Testis (tissue), 5 donors: ENCODE measurements at regions of chr2 and their contacts with region 1.

Region 1: DNA sequence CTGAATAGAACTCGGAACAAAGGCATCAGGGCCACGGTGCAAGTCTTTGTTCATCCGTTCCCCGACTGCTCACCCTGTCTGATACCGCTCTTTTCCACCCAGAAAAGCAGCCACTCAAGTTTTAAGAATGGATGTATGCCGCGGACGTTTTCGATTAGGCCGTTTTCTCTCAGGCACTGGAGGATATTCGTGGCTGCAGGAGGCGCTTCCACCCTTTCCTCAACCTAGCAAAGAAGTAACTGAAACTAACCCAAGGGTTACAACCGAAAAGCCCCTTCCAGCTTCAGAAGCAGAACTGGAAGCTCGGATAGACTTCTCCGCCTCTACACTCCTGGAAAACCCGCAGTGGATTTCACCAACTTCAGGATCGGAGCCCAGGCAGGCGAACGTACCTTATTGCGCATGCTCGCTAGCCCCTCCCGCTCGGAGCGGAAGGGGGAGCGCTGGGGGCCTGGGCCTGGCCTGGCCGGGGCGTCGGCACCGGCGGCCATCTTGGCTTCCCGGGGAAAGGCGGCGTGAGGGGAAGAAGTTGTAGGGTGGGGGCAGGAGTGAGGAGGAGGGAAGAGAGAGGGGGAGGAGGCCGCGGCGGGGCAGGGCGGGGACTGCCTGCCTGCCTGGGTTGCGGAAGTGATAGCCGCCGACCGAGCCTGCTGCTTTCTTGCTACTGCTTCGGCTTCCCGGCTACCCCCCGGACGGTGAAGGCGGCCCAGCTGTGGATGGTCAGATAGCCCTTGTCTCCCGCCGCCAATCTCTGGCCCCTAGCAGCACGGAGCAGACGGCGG is at the start of gene ACTR3:
- DNase-seq: peak; percentile 97
- H3K4me3 ChIP-seq: peak within 1 kb of the TSS; percentile 81 to 94
- H3K27ac ChIP-seq: peak within 1 kb of the TSS; percentile 84 to 94
- H3K4me1 ChIP-seq: peaks cover 45% of the 10 kb centered on the region
- H3K27me3 ChIP-seq: no peaks in the 10 kb centered on the region
- CTCF ChIP-seq: no peak
- POLR2A ChIP-seq: peak; percentile 68
- total RNA-seq, gene ACTR3: 106 to 114 TPM

Region 2: DNA sequence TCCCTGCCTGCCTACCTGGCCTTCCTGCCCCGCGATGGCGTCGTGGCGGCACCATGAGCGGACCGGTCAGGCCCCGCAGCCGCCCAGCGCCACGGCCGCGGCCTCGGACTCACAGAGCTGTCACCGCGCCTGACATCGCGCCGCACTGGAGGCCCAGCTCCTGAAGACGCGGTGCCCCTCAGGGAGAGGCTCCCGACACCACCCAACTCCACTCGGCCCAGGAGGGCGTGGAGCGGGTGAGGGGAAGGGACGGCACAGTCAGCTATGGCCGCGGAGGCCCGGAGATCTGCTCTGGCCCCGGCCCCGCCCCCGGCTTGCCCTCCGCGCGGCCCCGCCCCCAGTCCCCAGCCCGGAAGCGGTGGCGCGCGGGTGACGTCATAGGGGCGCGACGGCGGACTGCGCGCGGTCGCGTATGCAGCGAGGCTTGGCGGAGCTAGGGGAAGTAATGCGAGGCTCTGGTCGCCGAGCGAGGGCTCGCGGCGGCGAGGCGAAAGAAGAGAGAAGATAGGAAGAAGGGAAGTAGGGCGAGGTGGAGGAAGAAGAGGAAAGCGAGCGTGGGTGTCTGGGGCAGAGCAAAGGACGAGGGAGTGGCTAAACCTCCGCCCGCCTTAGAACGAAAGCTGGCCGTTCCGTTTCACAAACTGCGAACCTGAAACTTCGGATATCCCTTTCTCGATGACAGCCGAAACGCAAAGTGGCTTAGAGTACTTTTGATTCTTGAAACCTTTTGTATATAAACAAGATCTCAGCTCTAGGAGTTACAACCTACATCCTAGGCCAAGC is 133.1 kb before region 1 on chr2 and contains the start of gene SLC35F5:
- intact Hi-C with region 1: loop called (anchors 10 kb)
- DNase-seq: peak; percentile 93
- H3K4me3 ChIP-seq: peak within 1 kb of the TSS; percentile 81 to 86
- H3K27ac ChIP-seq: peak within 1 kb of the TSS; percentile 86 to 91
- H3K4me1 ChIP-seq: peaks cover 9% of the 10 kb centered on the region
- H3K27me3 ChIP-seq: no peaks in the 10 kb centered on the region
- CTCF ChIP-seq: no peak
- POLR2A ChIP-seq: peak; percentile 43
- total RNA-seq, gene SLC35F5: 102 to 110 TPM